Ovary (tissue), 10 donors: ENCODE measurements at regions of chr21 and their contacts with region 1.

Region 1: DNA sequence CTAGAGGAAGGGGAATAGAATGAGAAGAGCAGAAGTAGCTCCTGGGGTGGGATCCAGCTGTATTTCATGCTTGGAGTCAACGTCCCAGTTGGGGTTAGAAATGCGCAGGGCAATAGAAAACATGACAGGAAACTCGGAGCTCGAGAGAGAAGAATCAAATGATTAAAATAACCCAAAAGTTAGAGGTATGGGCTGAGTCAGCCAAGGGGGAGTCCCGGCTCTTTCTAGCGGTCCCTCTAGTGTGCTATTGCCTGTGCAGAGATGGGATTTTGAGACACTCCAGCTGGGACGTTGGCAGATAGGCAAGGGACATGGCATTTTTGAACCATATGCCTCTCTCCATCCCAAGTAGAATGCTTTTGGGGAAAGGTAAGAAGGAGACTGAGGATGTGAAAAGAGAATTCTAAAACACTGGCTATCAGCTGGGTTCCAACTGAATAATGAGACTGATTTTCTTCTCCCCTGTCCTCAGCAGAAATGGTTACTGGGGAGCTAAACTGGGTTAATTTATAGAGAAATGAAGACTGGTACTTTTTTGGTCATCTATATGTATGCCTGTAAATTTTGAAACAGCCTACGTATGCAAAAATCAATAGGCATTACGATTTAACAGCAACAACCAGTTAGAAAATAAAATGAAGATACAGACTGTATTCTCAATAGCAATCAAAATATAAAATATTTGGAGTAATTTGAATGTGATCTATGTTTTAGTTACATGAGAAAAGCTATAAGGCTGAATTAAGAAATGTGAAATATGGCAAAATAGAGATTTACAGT is 7.0 kb upstream of the VPS26C start:
- DNase-seq: no peak
- H3K4me3 ChIP-seq: no peak overlapping the region
- H3K27ac ChIP-seq: no peak overlapping the region
- H3K4me1 ChIP-seq: no peaks in the 10 kb centered on the region
- H3K27me3 ChIP-seq: no peaks in the 10 kb centered on the region
- CTCF ChIP-seq: no peak
- EP300 ChIP-seq: no peak
- POLR2A ChIP-seq: no peak

Region 2: DNA sequence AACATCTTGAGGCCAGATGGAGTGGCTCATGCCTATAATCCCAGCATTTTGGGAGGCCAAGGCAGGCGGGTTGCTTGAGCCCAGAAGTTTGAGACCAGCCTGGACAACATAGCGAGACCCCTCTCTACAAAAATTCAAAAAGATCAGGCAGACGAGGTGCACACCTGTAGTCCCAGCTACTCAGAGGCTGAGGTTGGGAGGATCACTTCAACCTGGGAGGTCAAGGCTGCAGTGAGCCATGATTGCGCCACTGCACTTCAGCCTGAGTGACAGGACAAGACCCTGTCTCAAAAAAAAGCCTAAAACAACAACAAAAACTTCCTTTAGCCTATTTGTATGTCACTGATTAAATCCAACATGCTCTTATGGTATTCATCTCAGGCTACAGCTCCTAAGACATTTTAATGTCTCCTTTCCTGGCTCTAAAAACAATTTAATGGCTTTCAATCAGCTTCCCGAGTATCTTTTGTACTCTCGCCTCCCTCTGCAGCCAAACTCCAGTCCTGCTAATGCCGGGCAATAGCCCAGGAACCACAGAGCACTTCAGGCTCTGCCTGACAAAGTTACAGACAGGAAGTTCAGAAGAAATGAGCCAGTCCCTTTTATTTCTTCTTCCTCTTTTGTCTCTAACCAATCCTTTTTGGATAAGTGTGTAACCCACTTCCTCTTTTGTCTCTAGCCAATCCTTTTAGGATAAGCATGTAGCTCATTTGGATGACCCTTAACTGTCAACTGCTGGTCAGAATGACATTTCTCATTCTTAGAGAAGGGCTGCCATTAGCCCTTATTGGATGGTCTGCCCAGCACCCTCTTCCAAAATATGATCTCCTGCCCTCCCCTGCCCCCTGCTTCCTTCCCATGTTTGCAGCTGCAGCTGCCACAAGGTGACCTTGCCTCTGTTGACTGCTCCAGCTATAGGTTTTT is 1124.1 kb before region 1 on chr21:
- intact Hi-C with region 1: loop called in 1 of 4 experiments (anchors 5 kb)
- DNase-seq: peak in 1 of 5 donors; percentile 52
- H3K4me3 ChIP-seq: no peak overlapping the region
- H3K27ac ChIP-seq: peak overlapping the region in 1 of 2 donors; percentile 2
- H3K4me1 ChIP-seq: no peaks in the 10 kb centered on the region
- H3K27me3 ChIP-seq: no peaks in the 10 kb centered on the region
- CTCF ChIP-seq: no peak
- EP300 ChIP-seq: no peak
- POLR2A ChIP-seq: no peak

Region 3: GRCh38 chr21:37232274-37233018 is 41.7 kb before region 1 on chr21:
- intact Hi-C with region 1: no loop called
- DNase-seq: no peak
- H3K4me3 ChIP-seq: no peak overlapping the region
- H3K27ac ChIP-seq: no peak overlapping the region
- H3K4me1 ChIP-seq: no peaks in the 10 kb centered on the region
- H3K27me3 ChIP-seq: no peaks in the 10 kb centered on the region
- CTCF ChIP-seq: no peak
- EP300 ChIP-seq: no peak
- POLR2A ChIP-seq: no peak

Region 4: DNA sequence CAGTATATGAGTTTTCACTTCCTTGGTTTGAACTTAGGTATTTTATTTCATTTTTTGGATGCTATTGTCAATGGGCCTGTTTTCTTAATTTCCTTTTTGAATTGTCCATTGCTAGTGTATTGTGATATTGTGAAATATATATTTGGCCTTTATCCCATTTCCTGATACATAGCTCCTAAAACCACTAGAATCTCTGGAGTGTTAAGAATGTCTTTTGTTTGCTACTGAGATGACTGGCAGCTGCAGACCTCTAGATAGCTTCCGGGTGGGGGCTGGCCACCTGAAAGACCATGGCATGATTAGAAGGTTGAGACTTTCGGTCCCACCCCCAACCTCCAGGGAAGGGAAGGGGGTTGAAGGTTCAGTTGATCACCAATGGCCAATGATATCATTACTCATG is 396.8 kb after region 1 on chr21:
- intact Hi-C with region 1: no loop called
- DNase-seq: no peak
- H3K4me3 ChIP-seq: no peak overlapping the region
- H3K27ac ChIP-seq: no peak overlapping the region
- H3K4me1 ChIP-seq: no peaks in the 10 kb centered on the region
- H3K27me3 ChIP-seq: no peaks in the 10 kb centered on the region
- CTCF ChIP-seq: no peak
- EP300 ChIP-seq: no peak
- POLR2A ChIP-seq: no peak